Dendritic cell treated with granulocyte-macrophage colony-stimulating factor and Interleukin-4, amounts not matched to agents 40 ng/mL and 50 ng/mL, for 4 days (primary cell): ENCODE measurements at regions of chr12 and their contacts with region 1.

Region 1: GRCh38 chr12:3135522-3136461 is 58.6 kb downstream of the TSPAN9 start:
- H3K4me3 Mint-ChIP-seq: no peak overlapping the region
- H3K27ac Mint-ChIP-seq: no peak overlapping the region
- H3K4me1 Mint-ChIP-seq: peaks cover 1% of the 10 kb centered on the region
- H3K27me3 Mint-ChIP-seq: peaks cover 94% of the 10 kb centered on the region

Region 2: DNA sequence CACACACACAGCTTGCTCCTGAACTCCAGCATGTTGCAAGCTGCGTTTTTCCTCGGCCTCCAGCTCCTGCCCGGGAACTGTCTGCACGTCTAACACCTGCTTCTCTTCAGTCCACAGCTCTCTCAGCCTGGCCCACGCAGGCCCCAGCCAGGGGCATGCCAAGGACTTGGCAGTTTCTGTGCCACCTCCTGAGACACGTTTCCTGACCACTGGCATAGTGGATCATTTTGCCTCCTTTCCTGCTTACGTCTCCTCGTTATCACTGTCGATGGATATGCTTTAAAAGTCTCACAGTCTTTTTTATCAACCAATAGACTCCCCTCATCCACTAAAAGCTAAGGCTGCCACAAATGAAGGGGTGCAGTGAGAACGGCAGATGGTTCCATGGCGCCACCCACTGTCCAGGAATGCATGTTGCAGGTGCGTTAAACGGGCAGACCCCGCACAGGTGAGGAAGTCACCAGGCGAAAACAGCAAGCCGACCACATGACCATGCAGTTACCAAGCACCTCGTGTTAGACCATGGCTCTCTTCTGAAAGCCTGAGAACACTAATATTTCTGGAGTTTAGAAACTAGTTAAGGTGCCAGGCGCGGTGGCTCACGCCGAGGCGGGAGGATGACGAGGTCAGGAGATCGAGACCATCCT is 191.3 kb before region 1 on chr12:
- intact Hi-C with region 1: no loop called
- H3K4me3 Mint-ChIP-seq: no peak overlapping the region
- H3K27ac Mint-ChIP-seq: no peak overlapping the region
- H3K4me1 Mint-ChIP-seq: no peaks in the 10 kb centered on the region
- H3K27me3 Mint-ChIP-seq: peaks cover 16% of the 10 kb centered on the region

Region 3: DNA sequence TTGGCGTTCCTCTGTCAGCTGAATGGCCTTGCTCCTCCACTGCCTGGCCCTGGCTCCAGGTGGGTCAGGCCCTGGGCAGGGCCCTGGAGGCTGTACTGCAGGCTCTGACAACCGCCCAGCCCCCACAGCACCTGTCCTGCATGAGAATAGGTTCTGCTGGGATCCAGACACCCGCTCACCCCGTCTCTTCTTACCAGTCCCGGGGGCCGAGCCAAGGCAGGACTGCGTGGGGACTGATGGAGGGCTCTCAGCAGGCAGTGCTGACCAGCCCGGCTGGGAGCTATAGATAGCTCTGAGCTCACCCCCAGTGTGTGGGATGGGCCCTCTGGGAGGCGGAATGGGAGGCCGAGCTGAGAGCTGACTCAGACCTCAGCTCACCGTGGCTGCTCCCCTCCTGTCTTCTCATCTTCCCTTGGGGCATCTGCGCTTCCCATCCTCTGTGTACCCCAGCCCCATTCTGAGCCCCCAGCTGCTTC is 137.0 kb before region 1 on chr12:
- intact Hi-C with region 1: no loop called
- H3K4me3 Mint-ChIP-seq: no peak overlapping the region
- H3K27ac Mint-ChIP-seq: no peak overlapping the region
- H3K4me1 Mint-ChIP-seq: no peaks in the 10 kb centered on the region
- H3K27me3 Mint-ChIP-seq: no peaks in the 10 kb centered on the region

Region 4: DNA sequence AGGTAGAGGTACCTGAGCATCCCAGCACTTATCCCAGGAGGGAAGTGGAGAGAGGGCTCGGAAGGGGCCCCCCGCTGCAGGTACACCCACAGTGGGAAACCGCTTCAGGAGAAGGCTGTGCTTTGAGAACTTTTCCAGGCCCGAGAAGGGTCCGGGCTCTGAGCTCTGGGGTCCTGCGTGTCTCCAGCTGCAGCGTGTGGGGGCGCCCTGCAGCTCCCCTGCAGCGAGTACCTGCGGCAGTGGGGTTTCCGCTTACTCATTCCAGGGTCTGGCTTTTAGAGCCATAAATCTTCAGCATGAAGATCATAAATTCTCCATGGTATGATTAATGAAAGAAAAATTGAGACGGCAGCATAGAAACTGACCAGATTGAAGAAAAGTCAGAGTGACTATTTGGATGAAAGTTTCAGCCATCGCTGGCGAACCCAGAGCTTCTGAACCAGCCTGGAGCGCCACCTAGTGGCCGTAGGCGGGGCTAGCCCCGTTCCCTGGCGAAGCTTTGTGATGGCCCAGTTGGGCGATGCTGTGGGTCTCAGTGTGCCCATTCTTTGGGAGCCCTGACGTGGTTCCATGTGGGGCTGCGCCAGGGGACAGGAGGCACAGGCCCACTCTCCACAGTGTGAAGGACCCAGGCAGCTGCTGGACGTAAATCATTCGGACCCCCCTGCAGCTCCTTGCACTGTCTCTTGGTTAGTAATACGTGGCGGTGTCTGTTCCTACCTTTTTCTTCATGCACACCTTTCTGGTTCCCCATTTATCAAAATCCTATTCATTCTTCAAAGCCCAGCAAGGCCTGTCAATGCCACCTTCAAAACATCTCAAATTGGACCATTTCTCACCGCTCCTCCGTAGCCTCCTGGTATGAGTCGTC is 139.6 kb after region 1 on chr12:
- intact Hi-C with region 1: loop called (anchors 1 kb)
- H3K4me3 Mint-ChIP-seq: no peak overlapping the region
- H3K27ac Mint-ChIP-seq: no peak overlapping the region
- H3K4me1 Mint-ChIP-seq: no peaks in the 10 kb centered on the region
- H3K27me3 Mint-ChIP-seq: peaks cover 53% of the 10 kb centered on the region